ENCODE measurements at regions of chr6 and their contacts with region 1.

Region 1: DNA sequence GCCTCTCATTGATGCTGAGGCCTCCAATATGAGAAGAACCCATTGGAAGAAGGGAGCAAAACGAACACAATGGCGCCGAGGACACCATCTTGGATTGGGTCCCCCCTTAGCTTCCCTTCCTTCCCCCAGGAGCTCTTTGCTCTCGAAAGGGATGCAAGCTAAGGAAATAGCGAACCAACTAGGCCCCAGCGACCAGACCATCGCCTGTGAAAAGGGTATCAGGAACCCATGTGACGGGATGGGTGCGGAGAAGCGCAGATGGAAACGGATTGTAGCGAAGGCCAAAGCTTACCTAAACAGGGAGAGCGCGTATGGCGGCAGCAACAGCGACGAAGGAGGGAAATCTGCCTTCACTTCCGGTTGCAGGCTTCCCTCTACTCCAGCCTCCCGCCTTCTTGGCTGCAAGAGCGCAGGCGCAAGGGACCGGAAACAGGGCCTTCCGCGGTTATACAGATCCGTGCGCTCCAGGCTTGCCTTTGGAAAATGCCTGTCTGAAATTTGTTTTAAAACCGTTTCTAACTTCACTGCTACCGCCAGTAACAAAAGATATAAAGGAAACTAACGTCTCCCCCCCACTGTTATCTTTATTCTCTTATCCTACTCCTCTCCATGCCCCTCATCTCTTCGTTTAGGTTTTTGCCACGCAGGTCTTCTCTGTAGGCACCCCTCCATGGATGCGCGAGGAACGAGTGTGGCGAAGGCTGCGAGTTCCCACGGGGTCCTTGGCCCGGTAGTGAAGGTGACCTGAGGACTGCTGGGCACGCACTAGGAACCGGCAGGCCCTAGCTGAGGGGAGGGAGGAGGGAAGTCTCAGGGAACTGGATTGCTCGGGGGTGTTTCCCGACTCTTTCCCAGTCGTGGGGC is at the start of gene DDX39B:
- DNase-seq: peak; percentile 95 to 97 (median 96)
- H3K4me3 ChIP-seq: peak within 1 kb of the TSS; percentile 96 to 97
- H3K4me3 Mint-ChIP-seq: peak within 1 kb of the TSS; percentile 96 to 99 (median 98)
- H3K27ac ChIP-seq: peak within 1 kb of the TSS; percentile 94
- H3K27ac Mint-ChIP-seq: peak within 1 kb of the TSS; percentile 94 to 100 (median 99)
- H3K4me1 ChIP-seq: peaks cover 48% of the 10 kb centered on the region
- H3K4me1 Mint-ChIP-seq: peaks cover 38 to 63% (median 51%) of the 10 kb centered on the region in 4 donors
- H3K27me3 ChIP-seq: no peaks in the 10 kb centered on the region
- H3K27me3 Mint-ChIP-seq: no peaks in the 10 kb centered on the region
- total RNA-seq, gene DDX39B: 729 to 737 TPM

Region 2: GRCh38 chr6:31462964-31463870 is 78.7 kb before region 1 on chr6:
- CTCF ChIA-PET with region 1: no interaction called
- POLR2A ChIA-PET with region 1: interaction called, 18 read pairs
- intact Hi-C with region 1: no loop called
- DNase-seq: peak; percentile 91 to 96 (median 94)
- H3K4me3 ChIP-seq: peak overlapping the region; percentile 82 to 85
- H3K4me3 Mint-ChIP-seq: peak overlapping the region; percentile 97 to 100 (median 100)
- H3K27ac ChIP-seq: peak overlapping the region; percentile 99
- H3K27ac Mint-ChIP-seq: peak overlapping the region; percentile 99 to 100 (median 100)
- H3K4me1 ChIP-seq: peaks cover 55% of the 10 kb centered on the region
- H3K4me1 Mint-ChIP-seq: peaks cover 47 to 73% (median 60%) of the 10 kb centered on the region in 4 donors
- H3K27me3 ChIP-seq: no peaks in the 10 kb centered on the region
- H3K27me3 Mint-ChIP-seq: no peaks in the 10 kb centered on the region

Region 3: DNA sequence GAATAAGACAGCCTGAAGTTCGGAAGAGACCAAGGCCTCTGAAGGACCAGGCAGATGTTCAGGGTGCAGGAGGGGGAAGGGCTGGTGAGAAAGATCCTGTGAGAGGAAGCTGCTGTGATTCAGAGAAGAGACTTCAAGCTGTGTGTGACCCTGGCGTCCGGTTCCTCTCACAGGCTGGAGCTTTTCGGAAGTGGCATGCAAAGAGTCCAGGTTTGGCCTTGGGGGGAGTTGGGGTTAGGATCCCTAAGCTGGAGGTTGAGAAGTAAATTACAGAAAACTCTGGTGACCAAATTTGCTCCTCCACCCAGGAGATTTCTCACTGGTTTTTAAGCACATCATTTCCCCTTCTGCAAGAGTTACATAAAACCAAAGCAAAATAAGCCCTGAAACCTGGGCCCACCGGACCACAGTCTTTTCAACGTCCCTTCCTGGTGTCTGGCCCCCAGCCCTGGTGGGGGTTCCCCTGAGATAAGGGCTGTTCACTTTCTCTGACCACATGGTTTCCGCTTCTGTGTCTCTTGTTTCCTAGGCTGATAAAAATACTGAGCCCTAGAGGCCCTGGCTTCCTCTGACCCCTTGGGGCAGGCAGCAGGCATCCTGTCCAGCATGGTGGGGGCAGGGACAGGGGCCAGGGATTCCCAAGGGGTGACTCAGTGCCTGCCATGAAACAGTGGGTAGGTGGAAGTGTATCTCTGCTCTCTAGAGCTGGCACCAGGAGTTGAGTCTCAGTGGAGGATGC is 18.2 kb after region 1 on chr6:
- CTCF ChIA-PET with region 1: interaction called, 3 read pairs
- POLR2A ChIA-PET with region 1: interaction called, 3,597 read pairs
- intact Hi-C with region 1: no loop called
- DNase-seq: peak in 3 of 5 donors; percentile 35 to 76 (median 38)
- H3K4me3 ChIP-seq: peak overlapping the region in 1 of 2 donors; percentile 53
- H3K4me3 Mint-ChIP-seq: peak overlapping the region; percentile 78 to 90 (median 84)
- H3K27ac ChIP-seq: peak overlapping the region; percentile 58
- H3K27ac Mint-ChIP-seq: peak overlapping the region; percentile 91 to 99 (median 95)
- H3K4me1 ChIP-seq: peaks cover 87% of the 10 kb centered on the region
- H3K4me1 Mint-ChIP-seq: peaks cover 53 to 87% (median 65%) of the 10 kb centered on the region in 4 donors
- H3K27me3 ChIP-seq: no peaks in the 10 kb centered on the region
- H3K27me3 Mint-ChIP-seq: no peaks in the 10 kb centered on the region

Region 4: DNA sequence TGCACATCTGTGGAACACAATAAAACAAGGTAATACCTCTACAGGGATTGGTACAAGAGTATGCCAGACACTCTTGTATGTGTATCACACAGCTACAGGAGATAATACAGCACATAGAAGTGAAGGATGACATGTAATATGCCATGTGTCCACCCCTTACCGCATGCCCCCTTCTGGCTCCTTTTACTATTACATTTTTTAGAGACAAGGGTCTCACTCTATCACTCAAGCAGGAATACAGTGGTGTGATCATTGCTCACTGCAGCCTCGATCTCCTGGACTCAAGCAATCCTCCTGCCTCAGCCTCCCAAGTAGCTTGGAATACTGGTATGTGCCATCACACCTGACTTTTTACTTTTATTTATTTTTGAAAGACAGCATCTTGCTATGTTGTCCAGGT is 55.1 kb after region 1 on chr6:
- CTCF ChIA-PET with region 1: interaction called, 1,152 read pairs
- POLR2A ChIA-PET with region 1: interaction called, 3,597 read pairs
- intact Hi-C with region 1: loop called (anchors 1 kb)
- DNase-seq: peak; percentile 66 to 79 (median 75)
- H3K4me3 ChIP-seq: no peak overlapping the region
- H3K4me3 Mint-ChIP-seq: peak overlapping the region in 5 of 8 donors; percentile 33 to 66 (median 43)
- H3K27ac ChIP-seq: no peak overlapping the region
- H3K27ac Mint-ChIP-seq: peak overlapping the region; percentile 60 to 89 (median 77)
- H3K4me1 ChIP-seq: peaks cover 60% of the 10 kb centered on the region
- H3K4me1 Mint-ChIP-seq: peaks cover 27 to 56% (median 45%) of the 10 kb centered on the region in 4 donors
- H3K27me3 ChIP-seq: no peaks in the 10 kb centered on the region
- H3K27me3 Mint-ChIP-seq: no peaks in the 10 kb centered on the region

Region 5: DNA sequence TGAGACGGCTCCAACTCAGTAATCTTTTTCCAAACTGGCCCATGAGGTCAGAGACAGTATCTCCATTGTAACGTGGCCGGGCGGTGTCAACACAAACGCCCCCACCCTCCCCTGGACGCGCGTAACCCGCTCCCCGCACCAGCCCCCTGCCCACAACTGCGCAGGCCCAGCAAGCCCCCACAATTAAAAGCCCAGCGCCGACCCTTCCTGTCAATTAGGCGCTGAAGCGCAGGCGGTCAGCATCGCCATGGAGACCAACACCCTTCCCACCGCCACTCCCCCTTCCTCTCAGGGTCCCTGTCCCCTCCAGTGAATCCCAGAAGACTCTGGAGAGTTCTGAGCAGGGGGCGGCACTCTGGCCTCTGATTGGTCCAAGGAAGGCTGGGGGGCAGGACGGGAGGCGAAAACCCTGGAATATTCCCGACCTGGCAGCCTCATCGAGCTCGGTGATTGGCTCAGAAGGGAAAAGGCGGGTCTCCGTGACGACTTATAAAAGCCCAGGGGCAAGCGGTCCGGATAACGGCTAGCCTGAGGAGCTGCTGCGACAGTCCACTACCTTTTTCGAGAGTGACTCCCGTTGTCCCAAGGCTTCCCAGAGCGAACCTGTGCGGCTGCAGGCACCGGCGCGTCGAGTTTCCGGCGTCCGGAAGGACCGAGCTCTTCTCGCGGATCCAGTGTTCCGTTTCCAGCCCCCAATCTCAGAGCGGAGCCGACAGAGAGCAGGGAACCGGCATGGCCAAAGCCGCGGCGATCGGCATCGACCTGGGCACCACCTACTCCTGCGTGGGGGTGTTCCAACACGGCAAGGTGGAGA is 273.3 kb after region 1 on chr6 and contains the starts of genes HSPA1A and HSPA1L:
- CTCF ChIA-PET with region 1: no interaction called
- POLR2A ChIA-PET with region 1: interaction called, 3 read pairs
- intact Hi-C with region 1: loop called (anchors 5 kb)
- DNase-seq: peak; percentile 38 to 69 (median 42)
- H3K4me3 ChIP-seq: peak within 1 kb of the TSS; percentile 81 to 97
- H3K4me3 Mint-ChIP-seq: peak within 1 kb of the TSS; percentile 91 to 96 (median 94)
- H3K27ac ChIP-seq: peak within 1 kb of the TSS; percentile 82
- H3K27ac Mint-ChIP-seq: peak within 1 kb of the TSS; percentile 88 to 95 (median 92)
- H3K4me1 ChIP-seq: peaks cover 50% of the 10 kb centered on the region
- H3K4me1 Mint-ChIP-seq: peaks cover 31 to 66% (median 46%) of the 10 kb centered on the region in 4 donors
- H3K27me3 ChIP-seq: no peaks in the 10 kb centered on the region
- H3K27me3 Mint-ChIP-seq: no peaks in the 10 kb centered on the region
- total RNA-seq, gene HSPA1A: 69.9 to 71.5 TPM
- total RNA-seq, gene HSPA1L: 8.2 to 8.3 TPM